H1 (cell line): ENCODE measurements at regions of chr17 and their contacts with region 1.

Region 1: DNA sequence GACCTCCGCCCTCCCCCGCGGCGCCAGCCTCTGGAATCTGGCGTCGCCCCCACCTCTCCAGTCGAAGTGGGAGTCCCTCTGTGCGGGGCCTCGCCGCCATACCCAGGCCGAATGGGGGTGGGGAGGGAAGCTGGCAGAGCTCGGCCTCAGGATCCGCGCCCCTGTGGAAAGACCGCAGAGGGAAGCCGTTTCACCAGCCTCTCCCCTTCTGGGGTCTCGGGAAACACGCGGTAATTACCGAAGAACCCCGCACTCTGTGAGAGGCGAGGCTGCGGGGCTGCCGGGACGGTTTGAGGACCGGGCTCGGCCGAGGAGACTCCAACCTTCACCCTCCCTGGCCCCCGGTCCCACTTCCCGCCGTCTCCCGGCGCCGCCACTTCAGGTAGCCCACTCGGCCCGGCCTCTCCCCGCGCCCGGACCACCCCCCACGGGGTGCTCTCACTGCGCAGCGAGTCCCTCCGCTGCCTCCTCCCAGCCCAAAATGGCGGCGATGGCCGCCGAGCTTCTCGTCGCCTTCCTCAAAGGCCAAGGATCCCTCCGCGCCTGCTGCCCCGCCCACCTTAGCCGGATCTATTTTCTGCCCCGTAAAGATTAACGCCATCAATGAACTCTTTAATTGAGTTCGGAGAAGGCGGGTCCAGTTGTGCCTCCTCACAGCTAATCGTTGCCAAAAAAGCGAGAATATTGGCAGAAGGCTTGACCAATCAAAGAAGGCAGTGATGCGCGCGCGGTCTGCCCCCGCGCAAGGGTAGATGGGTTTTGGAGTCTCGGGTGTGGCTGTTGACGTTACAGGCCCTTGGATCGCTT is 453 bp upstream of the HEXIM2 start:
- DNase-seq: peak; percentile 99
- H3K4me3 ChIP-seq: peak overlapping the region; percentile 73 to 97 (median 88)
- H3K27ac ChIP-seq: peak overlapping the region; percentile 99
- H3K4me1 ChIP-seq: peaks cover 0 to 9% (median 3%) of the 10 kb centered on the region in 4 experiments; a peak in 3 of 7 replicates
- H3K27me3 ChIP-seq: no peaks in the 10 kb centered on the region
- CTCF ChIP-seq: peak in 1 of 3 experiments; percentile 52; a peak in 1 of 4 replicates
- EP300 ChIP-seq: 0 out of 3 replicates have a peak, but pooled peaks of 1 of the 2 experiments have one; percentile 21
- POLR2A ChIP-seq: peak; percentile 98 to 100
- RAD21 ChIP-seq: peak in 1 of 2 experiments; percentile 24; a peak in 1 of 4 replicates

Region 2: DNA sequence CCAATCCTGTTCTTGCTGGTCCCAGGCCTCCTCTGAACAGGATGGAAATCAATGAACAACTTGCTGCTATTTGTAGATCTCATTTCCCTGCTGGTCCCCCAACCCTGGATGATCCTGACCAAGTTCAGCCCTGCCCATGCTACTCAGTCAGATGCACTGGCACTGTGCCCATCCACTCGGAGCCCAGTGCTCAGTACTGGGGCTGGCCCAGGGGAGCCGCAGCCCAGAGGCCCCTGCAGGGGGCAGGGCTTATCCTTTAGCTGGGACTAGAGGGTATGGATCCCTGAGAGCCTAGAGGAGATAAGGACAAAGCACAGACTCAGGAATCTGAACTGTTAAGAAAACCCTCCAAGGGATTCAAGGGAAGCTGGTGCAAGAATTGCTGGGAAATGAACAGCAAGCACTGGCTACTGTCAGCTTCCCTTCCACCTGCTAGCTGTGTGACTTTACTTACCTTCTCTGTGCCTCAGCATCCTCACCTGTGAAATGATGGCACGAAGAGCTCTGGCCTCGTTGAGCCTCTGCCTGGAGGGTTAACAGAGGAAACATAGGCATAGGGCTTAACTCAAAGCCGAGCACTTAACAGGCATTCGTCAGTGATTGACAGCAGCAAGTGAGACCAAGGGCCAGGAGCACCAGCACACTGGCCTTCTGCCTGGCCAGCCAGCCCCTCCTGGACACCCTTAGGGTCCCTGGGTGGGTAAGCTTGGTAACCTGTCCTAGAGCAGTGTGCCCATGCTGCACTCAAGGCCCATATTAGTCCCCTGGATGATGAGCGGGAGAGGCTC is 163.3 kb before region 1 on chr17:
- CTCF ChIA-PET with region 1: no interaction called
- POLR2A ChIA-PET with region 1: no interaction called
- DNase-seq: no peak
- H3K4me3 ChIP-seq: no peak overlapping the region
- H3K27ac ChIP-seq: no peak overlapping the region
- H3K4me1 ChIP-seq: peaks cover 0 to 3% (median 0%) of the 10 kb centered on the region in 4 experiments; a peak in 1 of 7 replicates
- H3K27me3 ChIP-seq: peaks cover 0 to 4% (median under 1%) of the 10 kb centered on the region in 4 experiments; a peak in 2 of 7 replicates
- CTCF ChIP-seq: no peak
- EP300 ChIP-seq: no peak
- POLR2A ChIP-seq: no peak
- RAD21 ChIP-seq: no peak

Region 3: DNA sequence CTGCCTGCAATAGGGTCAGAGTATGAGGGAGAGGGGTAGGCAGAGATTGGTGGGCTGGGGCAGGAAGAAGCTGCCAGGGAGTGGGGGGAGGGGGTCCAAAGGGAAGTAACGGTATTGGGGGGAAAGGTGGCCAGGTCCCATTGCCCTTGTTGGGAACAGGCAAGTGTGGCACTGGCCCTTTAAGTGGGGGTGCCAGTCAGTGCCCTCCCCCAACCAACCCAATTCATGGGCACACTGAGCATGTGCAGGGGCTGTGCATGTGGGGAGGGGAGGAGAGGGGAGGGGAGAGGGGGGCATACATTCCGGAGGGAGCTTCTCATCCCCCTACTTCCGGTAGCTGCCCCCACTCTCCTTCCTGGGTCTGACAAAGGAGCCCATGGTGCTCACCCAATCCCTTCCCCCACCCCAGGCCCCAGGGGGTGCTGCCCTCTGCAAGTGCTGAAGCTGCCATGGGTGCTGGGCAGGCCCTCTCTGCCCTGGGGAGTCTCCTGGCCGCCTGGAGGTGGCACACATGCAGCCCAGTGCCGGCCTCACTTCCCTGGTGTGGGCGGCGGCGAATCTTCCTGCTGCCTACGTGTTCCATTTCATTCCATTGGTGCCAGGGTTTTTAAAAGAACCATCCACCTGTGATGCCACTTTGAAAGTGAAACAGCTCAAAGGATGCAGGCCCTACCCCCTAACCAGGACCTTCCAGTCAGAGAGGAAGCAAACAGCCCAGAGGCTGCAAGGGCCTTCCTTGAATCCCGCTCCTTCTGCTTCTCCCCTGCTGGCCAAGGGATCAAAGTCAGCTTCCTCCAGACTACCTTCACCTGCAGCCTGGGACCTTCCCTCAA is 11.4 kb after region 1 on chr17:
- CTCF ChIA-PET with region 1: interaction called, 18 read pairs
- POLR2A ChIA-PET with region 1: interaction called, 1,076 read pairs
- DNase-seq: peak in 1 of 2 experiments; percentile 70
- H3K4me3 ChIP-seq: peak overlapping the region in 3 of 4 experiments; percentile 4 to 28 (median 10); a peak in 3 of 8 replicates
- H3K27ac ChIP-seq: peak overlapping the region; percentile 64
- H3K4me1 ChIP-seq: peaks cover 5 to 29% (median 26%) of the 10 kb centered on the region in 4 experiments
- H3K27me3 ChIP-seq: no peaks in the 10 kb centered on the region
- CTCF ChIP-seq: peak in 1 of 3 experiments; percentile 20; a peak in 1 of 4 replicates
- EP300 ChIP-seq: no peak
- POLR2A ChIP-seq: no peak
- RAD21 ChIP-seq: no peak

Region 4: GRCh38 chr17:45184144-45184543 is 22.9 kb after region 1 on chr17:
- CTCF ChIA-PET with region 1: no interaction called
- POLR2A ChIA-PET with region 1: interaction called, 1,076 read pairs
- DNase-seq: no peak
- H3K4me3 ChIP-seq: no peak overlapping the region
- H3K27ac ChIP-seq: no peak overlapping the region
- H3K4me1 ChIP-seq: peaks cover 0 to 3% (median 0%) of the 10 kb centered on the region in 4 experiments; a peak in 2 of 7 replicates
- H3K27me3 ChIP-seq: no peaks in the 10 kb centered on the region
- CTCF ChIP-seq: no peak
- EP300 ChIP-seq: no peak
- POLR2A ChIP-seq: no peak
- RAD21 ChIP-seq: no peak

Region 5: GRCh38 chr17:45190503-45191255 is 29.5 kb after region 1 on chr17:
- CTCF ChIA-PET with region 1: interaction called, 4 read pairs
- POLR2A ChIA-PET with region 1: interaction called, 15 read pairs
- DNase-seq: no peak
- H3K4me3 ChIP-seq: no peak overlapping the region
- H3K27ac ChIP-seq: no peak overlapping the region
- H3K4me1 ChIP-seq: no peaks in the 10 kb centered on the region
- H3K27me3 ChIP-seq: no peaks in the 10 kb centered on the region
- CTCF ChIP-seq: no peak
- EP300 ChIP-seq: no peak
- POLR2A ChIP-seq: no peak
- RAD21 ChIP-seq: no peak